Activated CD8-positive, alpha-beta memory T cell treated with anti-CD3 and anti-CD28 coated beads, Interleukin-2, amount 10 ng/mL, durations not matched to agents 7 days and 5 days (primary cell): ENCODE measurements at regions of chr1 and their contacts with region 1.

Region 1: GRCh38 chr1:7808253-7808844 is 24.3 kb downstream of the PER3 start:
- DNase-seq: no peak
- ATAC-seq: no peak
- H3K4me3 Mint-ChIP-seq: no peak overlapping the region
- H3K27ac Mint-ChIP-seq: no peak overlapping the region
- H3K4me1 Mint-ChIP-seq: peaks cover 2% of the 10 kb centered on the region
- H3K27me3 Mint-ChIP-seq: no peaks in the 10 kb centered on the region

Region 2: DNA sequence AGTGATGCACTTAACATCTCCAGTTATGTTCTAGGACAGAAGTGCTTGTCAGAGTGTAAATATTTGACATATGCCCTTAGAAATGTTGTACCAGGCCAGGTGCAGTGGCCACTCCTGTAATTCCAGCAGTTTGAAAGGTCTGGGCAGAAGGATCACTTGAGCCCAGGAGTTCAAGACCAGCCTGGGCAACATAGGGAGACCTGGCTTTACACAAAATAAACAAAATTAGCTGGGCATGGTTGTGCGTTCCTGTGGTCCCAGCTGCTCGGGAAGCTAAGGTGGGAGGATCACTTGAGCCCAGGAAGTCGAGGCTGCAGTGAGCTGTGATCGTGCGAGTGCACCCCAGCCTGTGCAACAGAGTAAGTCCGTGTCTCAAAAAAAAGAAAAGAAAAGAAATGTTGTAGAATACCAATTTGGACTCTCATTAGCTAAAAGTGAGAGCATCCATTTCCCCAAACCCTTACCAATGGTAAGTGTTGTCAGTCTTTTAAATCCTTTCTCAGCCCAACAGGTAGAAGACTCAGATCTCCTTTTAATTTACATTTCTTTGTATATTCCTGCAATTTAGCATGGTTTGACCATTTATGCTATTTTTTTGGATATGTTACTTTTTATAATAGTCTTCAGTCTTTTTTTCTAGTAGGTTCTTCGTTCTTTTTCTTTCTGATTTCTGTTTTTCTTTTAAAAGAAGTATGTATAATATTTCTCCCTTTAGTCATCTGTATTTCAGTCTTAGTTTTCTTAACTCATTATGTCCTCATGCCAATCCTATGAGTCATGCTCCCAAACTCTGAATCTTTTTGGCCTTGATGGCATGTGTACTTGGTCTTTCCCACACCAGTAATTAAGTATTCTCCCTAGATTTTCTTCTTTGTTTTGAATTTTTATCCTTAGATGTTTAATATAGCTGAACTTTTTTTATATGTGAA is 948.7 kb before region 1 on chr1:
- CTCF ChIA-PET with region 1: no interaction called
- DNase-seq: no peak
- ATAC-seq: no peak
- H3K4me3 Mint-ChIP-seq: no peak overlapping the region
- H3K27ac Mint-ChIP-seq: no peak overlapping the region
- H3K4me1 Mint-ChIP-seq: no peaks in the 10 kb centered on the region
- H3K27me3 Mint-ChIP-seq: no peaks in the 10 kb centered on the region

Region 3: GRCh38 chr1:7902478-7903085 is 94.2 kb after region 1 on chr1:
- CTCF ChIA-PET with region 1: interaction called, 12 read pairs
- DNase-seq: peak; percentile 68
- ATAC-seq: peak; percentile 90
- H3K4me3 Mint-ChIP-seq: peak overlapping the region; percentile 43
- H3K27ac Mint-ChIP-seq: no peak overlapping the region
- H3K4me1 Mint-ChIP-seq: peaks cover 11% of the 10 kb centered on the region
- H3K27me3 Mint-ChIP-seq: no peaks in the 10 kb centered on the region